Adrenal gland (tissue), 19 donors: ENCODE measurements at regions of chr17 and their contacts with region 1.

Region 1: GRCh38 chr17:32783602-32784001 is 93.3 kb downstream of the MYO1D start:
- DNase-seq: no peak
- H3K4me3 ChIP-seq: no peak overlapping the region
- H3K27ac ChIP-seq: no peak overlapping the region
- H3K4me1 ChIP-seq: peaks cover 5 to 6% of the 10 kb centered on the region in 2 donors
- H3K27me3 ChIP-seq: no peaks in the 10 kb centered on the region
- CTCF ChIP-seq: peak; percentile 69 to 90 (median 86)
- POLR2A ChIP-seq: no peak

Region 2: GRCh38 chr17:32877164-32877764 is 93.7 kb after region 1 on chr17:
- intact Hi-C with region 1: loop called in 1 of 2 experiments (anchors 2 kb)
- DNase-seq: peak; percentile 90 to 95 (median 93)
- H3K4me3 ChIP-seq: peak overlapping the region in 2 of 4 donors; percentile 67 to 83
- H3K27ac ChIP-seq: peak overlapping the region in 4 of 5 donors; percentile 73 to 95 (median 92)
- H3K4me1 ChIP-seq: peaks cover 14 to 18% of the 10 kb centered on the region in 2 donors
- H3K27me3 ChIP-seq: no peaks in the 10 kb centered on the region
- CTCF ChIP-seq: peak; percentile 31 to 99 (median 86)
- POLR2A ChIP-seq: no peak

Region 3: DNA sequence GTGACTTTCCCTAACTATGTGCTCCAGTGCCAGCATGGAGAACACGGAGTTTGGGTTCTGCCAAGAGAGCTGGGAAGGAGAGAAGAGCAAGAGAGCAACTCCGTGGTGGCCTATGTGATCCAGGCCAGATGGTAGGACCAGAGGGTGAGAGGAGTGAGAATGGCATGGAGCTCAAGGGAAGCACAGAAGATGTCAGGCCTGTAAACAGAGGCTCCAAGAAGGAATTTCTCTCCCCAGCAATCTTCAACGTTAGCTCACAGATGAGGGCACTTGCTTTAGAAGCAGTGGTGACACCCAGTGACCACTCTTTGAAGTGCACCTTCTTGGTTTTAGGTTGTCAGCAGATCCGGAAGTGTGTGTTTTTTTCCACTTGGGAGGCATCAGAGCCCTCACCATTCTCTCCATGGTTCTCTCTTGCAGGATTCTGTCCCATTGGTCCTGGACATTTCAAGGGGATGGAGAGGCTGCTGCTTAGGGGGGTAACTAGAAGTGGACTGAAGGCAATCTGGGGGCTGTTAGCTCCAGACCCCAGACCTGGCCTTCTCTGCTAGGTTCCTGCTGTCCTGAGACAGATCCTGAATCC is 126.3 kb after region 1 on chr17:
- intact Hi-C with region 1: loop called in 1 of 2 experiments (anchors 10 kb)
- DNase-seq: peak; percentile 83 to 95 (median 88)
- H3K4me3 ChIP-seq: no peak overlapping the region
- H3K27ac ChIP-seq: no peak overlapping the region
- H3K4me1 ChIP-seq: peaks cover 0 to 9% of the 10 kb centered on the region in 2 donors
- H3K27me3 ChIP-seq: no peaks in the 10 kb centered on the region
- CTCF ChIP-seq: peak; percentile 79 to 94 (median 84)
- POLR2A ChIP-seq: no peak